T-cell (primary cell): ENCODE measurements at regions of chr9 and their contacts with region 1.

Region 1: GRCh38 chr9:35696525-35697215 is 6.9 kb upstream of the TPM2 start:
- DNase-seq: peak in 31 of 35 experiments; percentile 15 to 75 (median 39)
- ATAC-seq: peak; percentile 85 to 93 (median 88)
- H3K4me3 ChIP-seq: no peak overlapping the region
- H3K4me3 Mint-ChIP-seq: no peak overlapping the region
- H3K27ac ChIP-seq: no peak overlapping the region
- H3K27ac Mint-ChIP-seq: peak overlapping the region; percentile 64 to 66
- H3K4me1 ChIP-seq: peaks cover 0 to 9% of the 10 kb centered on the region in 2 experiments
- H3K4me1 Mint-ChIP-seq: peaks cover 13 to 15% (median 14%) of the 10 kb centered on the region in 3 donors
- H3K27me3 ChIP-seq: no peaks in the 10 kb centered on the region
- H3K27me3 Mint-ChIP-seq: no peaks in the 10 kb centered on the region

Region 2: GRCh38 chr9:35611230-35611797 is 85.4 kb before region 1 on chr9:
- CTCF ChIA-PET with region 1: interaction called, 5 to 15 read pairs
- POLR2A ChIA-PET with region 1: no interaction called
- DNase-seq: peak in 33 of 35 experiments; percentile 8 to 76 (median 50)
- ATAC-seq: peak; percentile 83 to 96 (median 91)
- H3K4me3 ChIP-seq: no peak overlapping the region
- H3K4me3 Mint-ChIP-seq: no peak overlapping the region
- H3K27ac ChIP-seq: no peak overlapping the region
- H3K27ac Mint-ChIP-seq: peak overlapping the region; percentile 47 to 49
- H3K4me1 ChIP-seq: peaks cover 4 to 23% of the 10 kb centered on the region in 2 experiments
- H3K4me1 Mint-ChIP-seq: peaks cover 23 to 31% (median 26%) of the 10 kb centered on the region in 3 donors
- H3K27me3 ChIP-seq: no peaks in the 10 kb centered on the region
- H3K27me3 Mint-ChIP-seq: no peaks in the 10 kb centered on the region

Region 3: GRCh38 chr9:35646533-35647265 is 50.0 kb before region 1 on chr9:
- CTCF ChIA-PET with region 1: interaction called, 6 to 29 read pairs
- POLR2A ChIA-PET with region 1: no interaction called
- DNase-seq: peak; percentile 74 to 95 (median 87)
- ATAC-seq: peak; percentile 83 to 87 (median 85)
- H3K4me3 ChIP-seq: peak overlapping the region; percentile 81 to 84
- H3K4me3 Mint-ChIP-seq: peak overlapping the region; percentile 85 to 97 (median 95)
- H3K27ac ChIP-seq: peak overlapping the region; percentile 92
- H3K27ac Mint-ChIP-seq: peak overlapping the region; percentile 99
- H3K4me1 ChIP-seq: peaks cover 31 to 78% of the 10 kb centered on the region in 2 experiments
- H3K4me1 Mint-ChIP-seq: peaks cover 54 to 74% (median 59%) of the 10 kb centered on the region in 3 donors
- H3K27me3 ChIP-seq: no peaks in the 10 kb centered on the region
- H3K27me3 Mint-ChIP-seq: no peaks in the 10 kb centered on the region

Region 4: GRCh38 chr9:35664531-35665470 is 31.9 kb before region 1 on chr9 and contains the start of gene ARHGEF39:
- CTCF ChIA-PET with region 1: interaction called, 6 to 50 read pairs
- POLR2A ChIA-PET with region 1: no interaction called
- DNase-seq: peak in 32 of 35 experiments; percentile 16 to 77 (median 43)
- ATAC-seq: peak; percentile 68 to 76 (median 74)
- H3K4me3 ChIP-seq: peak within 1 kb of the TSS; percentile 60 to 66
- H3K4me3 Mint-ChIP-seq: peak within 1 kb of the TSS; percentile 76 to 88 (median 82)
- H3K27ac ChIP-seq: peak within 1 kb of the TSS; percentile 54
- H3K27ac Mint-ChIP-seq: peak within 1 kb of the TSS; percentile 92 to 93
- H3K4me1 ChIP-seq: peaks cover 25 to 56% of the 10 kb centered on the region in 2 experiments
- H3K4me1 Mint-ChIP-seq: peaks cover 59 to 65% (median 61%) of the 10 kb centered on the region in 3 donors
- H3K27me3 ChIP-seq: no peaks in the 10 kb centered on the region
- H3K27me3 Mint-ChIP-seq: no peaks in the 10 kb centered on the region
- total RNA-seq, gene ARHGEF39: 0.12 to 1.3 (median 0.57) TPM

Region 5: DNA sequence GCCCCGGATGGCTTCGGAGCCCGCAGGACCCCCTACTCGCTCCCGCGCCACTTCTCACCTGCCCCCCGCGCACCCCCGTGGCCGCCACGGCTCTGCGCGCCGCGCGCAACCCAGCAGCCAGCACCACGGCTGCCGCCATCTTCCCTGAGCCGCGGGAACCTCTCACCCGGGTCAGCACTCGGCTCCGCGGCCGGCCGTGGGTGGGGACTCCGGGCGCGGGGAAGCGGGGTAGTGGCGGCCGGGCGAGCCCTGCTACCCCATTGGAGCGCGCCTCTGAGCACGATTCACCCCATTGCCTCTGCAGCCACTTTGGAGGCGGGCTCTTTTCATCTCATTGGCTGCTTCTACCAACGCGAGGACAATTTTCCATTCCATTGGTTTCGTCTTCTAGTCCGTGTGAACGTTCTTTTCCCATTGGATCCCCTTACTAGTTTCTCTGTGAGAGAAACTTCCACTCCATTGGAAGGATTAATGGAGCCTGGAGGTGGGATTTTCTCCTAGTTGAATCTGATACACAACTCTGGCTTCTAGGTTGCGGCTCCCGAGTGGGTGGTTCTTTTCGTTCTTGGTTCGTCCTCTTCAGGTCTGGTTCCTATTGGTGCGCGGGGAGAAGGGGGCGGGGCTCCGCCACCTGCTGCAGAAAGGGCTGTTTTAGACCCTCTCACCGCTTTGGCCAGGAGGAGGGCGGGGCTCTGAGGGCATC is 118.3 kb after region 1 on chr9 and contains the start of gene HINT2:
- CTCF ChIA-PET with region 1: interaction called in 1 of 2 experiments, 11 read pairs
- POLR2A ChIA-PET with region 1: no interaction called
- DNase-seq: peak; percentile 93 to 99 (median 97)
- ATAC-seq: peak; percentile 77 to 87 (median 86)
- H3K4me3 ChIP-seq: peak within 1 kb of the TSS; percentile 85 to 90
- H3K4me3 Mint-ChIP-seq: peak within 1 kb of the TSS; percentile 84 to 97 (median 96)
- H3K27ac ChIP-seq: peak within 1 kb of the TSS; percentile 82
- H3K27ac Mint-ChIP-seq: peak within 1 kb of the TSS; percentile 96 to 98
- H3K4me1 ChIP-seq: peaks cover 9 to 39% of the 10 kb centered on the region in 2 experiments
- H3K4me1 Mint-ChIP-seq: peaks cover 35 to 43% (median 37%) of the 10 kb centered on the region in 3 donors
- H3K27me3 ChIP-seq: no peaks in the 10 kb centered on the region
- H3K27me3 Mint-ChIP-seq: no peaks in the 10 kb centered on the region
- total RNA-seq, gene HINT2: 15.4 to 30.3 (median 28.5) TPM

Region 6: DNA sequence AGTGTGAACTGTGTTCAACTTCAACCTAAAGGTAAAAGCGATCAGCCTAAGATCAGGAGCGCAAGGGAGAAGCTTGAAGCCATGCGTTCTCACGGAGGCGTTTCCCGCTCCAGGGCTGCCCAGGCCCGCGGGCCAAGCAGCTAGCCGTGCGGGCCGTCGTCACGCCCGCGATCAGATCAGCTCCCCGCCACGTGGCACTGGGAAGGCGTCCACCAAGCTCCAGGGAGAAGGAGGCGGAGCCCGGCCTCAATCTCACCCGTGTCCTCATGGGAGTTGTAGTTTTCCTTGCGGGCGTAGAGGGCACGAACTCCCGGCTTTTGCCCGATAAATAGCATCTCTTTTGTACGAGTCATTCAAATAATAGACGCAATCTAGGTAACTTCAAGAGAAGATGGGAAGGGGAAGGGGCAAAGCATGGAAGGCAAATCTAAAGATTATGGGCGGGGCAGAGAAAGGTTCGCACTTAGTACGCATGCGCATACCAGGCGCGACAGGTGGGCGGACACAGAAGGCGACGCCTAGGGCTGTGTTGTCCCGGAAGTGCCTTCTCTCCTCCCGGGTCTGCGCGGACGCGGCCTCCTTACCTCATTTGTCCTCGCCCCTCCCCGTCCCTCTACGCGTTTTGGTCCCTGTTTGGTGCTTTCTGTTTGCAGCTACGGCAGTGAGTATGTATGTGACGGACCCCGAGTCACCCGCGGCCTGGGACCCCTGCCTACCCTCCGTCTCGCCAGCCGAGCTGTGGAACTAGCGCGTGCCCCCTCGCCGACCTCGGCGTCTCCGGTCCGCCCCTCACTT is 1382.9 kb after region 1 on chr9:
- CTCF ChIA-PET with region 1: interaction called in 1 of 2 experiments, 10 read pairs
- POLR2A ChIA-PET with region 1: no interaction called
- DNase-seq: peak; percentile 78 to 96 (median 92)
- ATAC-seq: peak; percentile 96 to 98 (median 96)
- H3K4me3 ChIP-seq: peak overlapping the region; percentile 75 to 90
- H3K4me3 Mint-ChIP-seq: peak overlapping the region; percentile 86 to 96 (median 96)
- H3K27ac ChIP-seq: peak overlapping the region; percentile 71
- H3K27ac Mint-ChIP-seq: peak overlapping the region; percentile 97
- H3K4me1 ChIP-seq: peaks cover 19% of the 10 kb centered on the region in 2 experiments
- H3K4me1 Mint-ChIP-seq: peaks cover 52 to 58% (median 54%) of the 10 kb centered on the region in 3 donors
- H3K27me3 ChIP-seq: no peaks in the 10 kb centered on the region
- H3K27me3 Mint-ChIP-seq: peaks cover 3 to 5% of the 10 kb centered on the region in 2 donors